ENCODE measurements at regions of chr9 and their contacts with region 1.

Region 1: GRCh38 chr9:893843-894420 is 52.4 kb downstream of the DMRT1 start:
- DNase-seq: peak; percentile 17
- H3K4me3 Mint-ChIP-seq: no peak overlapping the region
- H3K27ac Mint-ChIP-seq: peak overlapping the region; percentile 1
- H3K4me1 Mint-ChIP-seq: peaks cover 9% of the 10 kb centered on the region
- H3K27me3 Mint-ChIP-seq: peaks cover 15% of the 10 kb centered on the region

Region 2: GRCh38 chr9:928362-929042 is 34.6 kb after region 1 on chr9:
- intact Hi-C with region 1: no loop called
- DNase-seq: no peak
- H3K4me3 Mint-ChIP-seq: no peak overlapping the region
- H3K27ac Mint-ChIP-seq: no peak overlapping the region
- H3K4me1 Mint-ChIP-seq: no peaks in the 10 kb centered on the region
- H3K27me3 Mint-ChIP-seq: peaks cover 4% of the 10 kb centered on the region

Region 3: DNA sequence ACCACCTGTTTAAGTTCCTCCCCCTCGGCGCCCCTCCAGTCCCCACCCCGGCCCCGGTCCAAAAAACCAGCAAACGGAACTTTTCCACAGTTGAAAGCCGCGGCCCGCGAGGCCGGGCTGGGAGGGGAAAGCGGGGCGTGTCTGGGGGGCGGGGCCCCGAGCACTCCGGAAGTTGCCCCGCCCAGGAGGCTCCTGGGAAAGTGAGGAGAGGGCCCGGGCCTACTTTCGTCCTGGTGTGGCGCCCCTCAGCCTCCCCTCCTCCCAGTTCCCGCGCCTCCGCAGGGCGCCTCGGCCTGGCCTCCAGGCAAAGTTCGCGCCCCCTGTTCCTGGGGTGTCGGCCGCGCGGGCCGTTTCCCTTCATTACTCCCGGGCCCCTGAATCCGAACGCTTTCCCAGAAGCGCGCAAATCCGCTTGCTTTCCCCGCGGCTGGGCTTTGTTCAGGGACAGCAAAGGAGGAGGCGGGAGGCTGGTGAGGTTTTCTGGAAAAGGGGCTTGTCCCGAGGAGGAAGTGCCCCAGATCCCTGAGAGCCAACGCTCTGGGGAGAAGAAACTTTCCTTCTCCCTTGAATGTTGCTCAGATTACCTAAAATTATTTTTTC is 78.1 kb after region 1 on chr9:
- intact Hi-C with region 1: no loop called
- DNase-seq: no peak
- H3K4me3 Mint-ChIP-seq: no peak overlapping the region
- H3K27ac Mint-ChIP-seq: peak overlapping the region; percentile 48
- H3K4me1 Mint-ChIP-seq: peaks cover 21% of the 10 kb centered on the region
- H3K27me3 Mint-ChIP-seq: peaks cover 77% of the 10 kb centered on the region

Region 4: GRCh38 chr9:982394-983230 is 88.7 kb after region 1 on chr9:
- intact Hi-C with region 1: no loop called
- DNase-seq: no peak
- H3K4me3 Mint-ChIP-seq: no peak overlapping the region
- H3K27ac Mint-ChIP-seq: no peak overlapping the region
- H3K4me1 Mint-ChIP-seq: no peaks in the 10 kb centered on the region
- H3K27me3 Mint-ChIP-seq: peaks cover 81% of the 10 kb centered on the region

Region 5: DNA sequence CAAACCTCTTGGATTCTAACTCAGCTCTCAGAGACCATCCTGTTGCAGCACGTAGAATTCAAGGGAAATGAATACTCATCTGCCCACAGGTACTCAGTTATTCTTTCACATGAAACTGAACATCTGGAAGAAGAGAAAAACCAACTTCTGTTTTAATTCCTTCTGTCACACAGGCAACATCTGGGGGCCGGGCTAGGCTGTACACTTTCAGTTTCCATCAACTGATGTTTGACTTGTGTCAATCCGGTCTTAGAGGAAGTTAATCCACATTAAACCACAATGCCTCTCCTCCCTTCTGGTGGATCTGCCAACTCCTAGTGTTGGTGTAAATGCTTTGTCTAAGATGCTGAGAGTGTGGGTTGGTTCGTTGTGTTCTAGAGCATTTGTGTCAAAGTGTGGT is 100.1 kb after region 1 on chr9:
- intact Hi-C with region 1: no loop called
- DNase-seq: no peak
- H3K4me3 Mint-ChIP-seq: no peak overlapping the region
- H3K27ac Mint-ChIP-seq: no peak overlapping the region
- H3K4me1 Mint-ChIP-seq: peaks cover 6% of the 10 kb centered on the region
- H3K27me3 Mint-ChIP-seq: peaks cover 22% of the 10 kb centered on the region

Region 6: GRCh38 chr9:1604942-1605560 is 711.1 kb after region 1 on chr9:
- intact Hi-C with region 1: loop called (anchors 5 kb)
- DNase-seq: no peak
- H3K4me3 Mint-ChIP-seq: no peak overlapping the region
- H3K27ac Mint-ChIP-seq: no peak overlapping the region
- H3K4me1 Mint-ChIP-seq: no peaks in the 10 kb centered on the region
- H3K27me3 Mint-ChIP-seq: peaks cover 2% of the 10 kb centered on the region